AG04449 (cell line): ENCODE measurements at regions of chr19 and their contacts with region 1.

Region 1: DNA sequence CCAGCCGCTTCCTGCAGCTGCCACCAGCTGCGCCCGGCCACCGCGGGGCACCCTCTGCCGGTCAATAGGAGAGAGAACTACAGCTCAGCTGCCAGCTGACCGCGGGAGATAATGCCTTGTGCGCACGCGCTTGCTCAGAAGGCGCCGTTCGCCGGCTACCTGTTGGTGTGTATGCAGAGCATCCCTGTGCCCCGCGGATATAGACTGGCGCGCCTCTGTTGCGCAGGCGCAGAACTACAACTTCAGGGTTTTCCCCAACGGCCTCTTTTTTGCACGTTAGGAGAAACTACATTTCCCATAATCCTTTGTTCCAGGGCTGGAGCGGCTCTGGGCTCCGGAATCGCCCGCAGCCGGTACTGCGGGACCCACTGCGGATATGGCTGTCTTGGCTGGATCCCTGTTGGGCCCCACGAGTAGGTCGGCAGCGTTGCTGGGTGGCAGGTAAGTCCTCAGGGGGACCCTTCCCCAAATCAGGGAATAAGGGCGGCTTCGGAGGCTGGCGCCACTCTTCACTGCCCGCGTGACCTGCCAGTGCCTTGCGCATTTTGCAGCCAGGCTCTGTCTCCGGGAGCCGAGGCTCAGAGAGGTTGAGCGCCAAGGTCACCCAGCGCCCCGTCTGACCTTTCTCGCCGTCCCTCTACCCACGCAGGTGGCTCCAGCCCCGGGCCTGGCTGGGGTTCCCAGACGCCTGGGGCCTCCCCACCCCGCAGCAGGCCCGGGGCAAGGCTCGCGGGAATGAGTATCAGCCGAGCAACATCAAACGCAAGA is at the start of gene MRPL34:
- DNase-seq: peak; percentile 94
- H3K4me3 ChIP-seq: peak within 1 kb of the TSS; percentile 75
- CTCF ChIP-seq: peak; percentile 89

Region 2: GRCh38 chr19:17292286-17293097 is 13.2 kb before region 1 on chr19:
- CTCF ChIA-PET with region 1: interaction called, 69 read pairs
- POLR2A ChIA-PET with region 1: no interaction called
- DNase-seq: no peak
- H3K4me3 ChIP-seq: peak overlapping the region; percentile 63
- CTCF ChIP-seq: peak; percentile 82